ENCODE measurements at regions of chr7 and their contacts with region 1.

Region 1: GRCh38 chr7:127253281-127254162 is 781 bp upstream of the GRM8 start:
- DNase-seq: peak; percentile 61
- H3K4me3 Mint-ChIP-seq: peak overlapping the region; percentile 76
- H3K27ac Mint-ChIP-seq: no peak overlapping the region
- H3K4me1 Mint-ChIP-seq: peaks cover 16% of the 10 kb centered on the region
- H3K27me3 Mint-ChIP-seq: peaks cover 57% of the 10 kb centered on the region

Region 2: DNA sequence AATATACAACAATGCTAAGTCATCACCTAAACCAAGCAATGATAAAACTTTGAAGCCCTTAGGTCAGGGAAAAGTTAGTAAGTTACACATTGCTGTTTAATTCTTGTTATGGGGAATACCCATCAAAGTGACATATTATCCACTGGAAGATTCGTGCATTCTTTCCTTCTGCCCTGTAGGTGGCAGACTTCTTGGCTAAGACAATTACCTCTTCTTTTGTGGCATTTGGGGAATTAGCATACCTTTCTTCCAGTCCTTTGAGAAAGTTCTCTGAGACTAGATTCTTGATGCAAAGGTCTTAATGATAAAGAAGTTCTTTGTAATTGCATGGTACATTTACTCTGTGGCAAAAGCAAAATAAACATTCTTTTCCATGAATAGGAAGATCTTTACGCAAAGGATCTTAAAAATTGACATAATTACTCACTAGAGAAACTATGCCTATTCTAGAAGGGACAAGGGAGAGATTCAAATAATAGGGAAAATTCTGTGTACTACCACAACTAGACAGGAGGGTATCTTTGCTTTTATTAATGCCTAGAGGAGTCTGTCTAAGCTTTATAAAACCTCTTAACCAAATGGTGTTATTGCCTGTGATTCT is 396.7 kb before region 1 on chr7:
- CTCF ChIA-PET with region 1: no interaction called
- intact Hi-C with region 1: loop called (anchors 1 kb)
- DNase-seq: no peak
- H3K4me3 Mint-ChIP-seq: no peak overlapping the region
- H3K27ac Mint-ChIP-seq: no peak overlapping the region
- H3K4me1 Mint-ChIP-seq: no peaks in the 10 kb centered on the region
- H3K27me3 Mint-ChIP-seq: peaks cover 11% of the 10 kb centered on the region

Region 3: GRCh38 chr7:127392566-127393367 is 139.2 kb after region 1 on chr7 and contains the start of gene ZNF800:
- CTCF ChIA-PET with region 1: no interaction called
- intact Hi-C with region 1: loop called (anchors 5 kb)
- DNase-seq: peak; percentile 89
- H3K4me3 Mint-ChIP-seq: peak within 1 kb of the TSS; percentile 95
- H3K27ac Mint-ChIP-seq: peak within 1 kb of the TSS; percentile 93
- H3K4me1 Mint-ChIP-seq: peaks cover 61% of the 10 kb centered on the region
- H3K27me3 Mint-ChIP-seq: no peaks in the 10 kb centered on the region
- total RNA-seq, gene ZNF800: 18.2 to 19.5 TPM

Region 4: DNA sequence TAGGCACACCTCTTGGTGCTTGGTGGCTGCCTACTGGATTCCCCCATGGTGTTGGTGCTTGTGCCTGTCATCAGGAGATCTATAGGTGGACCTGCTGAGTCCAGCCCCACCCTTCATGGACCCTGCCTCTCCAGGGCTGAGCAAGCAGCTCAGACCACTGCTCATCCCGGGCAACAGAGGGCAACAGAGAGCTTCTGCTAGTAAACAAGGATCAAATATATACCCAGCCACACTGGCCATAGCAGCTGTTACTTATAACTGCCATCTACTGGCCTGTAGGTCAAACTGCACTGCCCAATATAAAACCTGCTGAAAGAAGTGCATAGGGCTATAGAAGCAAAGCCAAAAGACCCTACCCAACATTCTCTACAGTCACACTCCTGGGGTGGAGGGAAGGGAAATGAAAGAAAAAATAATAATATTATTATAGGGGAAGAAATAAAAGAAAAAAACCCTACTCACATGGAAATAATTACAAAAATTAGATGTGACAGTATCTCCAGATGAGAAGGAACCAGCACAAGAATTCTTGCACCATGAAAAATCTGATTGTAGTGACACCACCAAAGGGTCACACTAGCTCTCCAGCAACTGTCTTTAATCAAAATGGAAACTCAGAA is 193.9 kb after region 1 on chr7:
- CTCF ChIA-PET with region 1: interaction called, 3 read pairs
- intact Hi-C with region 1: loop called (anchors 1 kb)
- DNase-seq: peak; percentile 52
- H3K4me3 Mint-ChIP-seq: no peak overlapping the region
- H3K27ac Mint-ChIP-seq: no peak overlapping the region
- H3K4me1 Mint-ChIP-seq: peaks cover 15% of the 10 kb centered on the region
- H3K27me3 Mint-ChIP-seq: no peaks in the 10 kb centered on the region

Region 5: GRCh38 chr7:127585044-127585953 is 331.8 kb after region 1 on chr7 and contains the start of gene GCC1:
- CTCF ChIA-PET with region 1: no interaction called
- intact Hi-C with region 1: loop called (anchors 5 kb)
- DNase-seq: peak; percentile 94
- H3K4me3 Mint-ChIP-seq: peak within 1 kb of the TSS; percentile 89
- H3K27ac Mint-ChIP-seq: peak within 1 kb of the TSS; percentile 70
- H3K4me1 Mint-ChIP-seq: peaks cover 66% of the 10 kb centered on the region
- H3K27me3 Mint-ChIP-seq: no peaks in the 10 kb centered on the region
- total RNA-seq, gene GCC1: 11.0 to 12.0 TPM